ENCODE measurements at regions of chr22 and their contacts with region 1.

Region 1: GRCh38 chr22:30634471-30635233 is 929 bp upstream of the SLC35E4 start:
- DNase-seq: peak; percentile 91 to 96
- ATAC-seq: peak; percentile 92
- H3K4me3 ChIP-seq: no peak overlapping the region
- H3K27ac ChIP-seq: peak overlapping the region; percentile 62 to 79
- H3K4me1 ChIP-seq: no peaks in the 10 kb centered on the region
- H3K27me3 ChIP-seq: no peaks in the 10 kb centered on the region

Region 2: DNA sequence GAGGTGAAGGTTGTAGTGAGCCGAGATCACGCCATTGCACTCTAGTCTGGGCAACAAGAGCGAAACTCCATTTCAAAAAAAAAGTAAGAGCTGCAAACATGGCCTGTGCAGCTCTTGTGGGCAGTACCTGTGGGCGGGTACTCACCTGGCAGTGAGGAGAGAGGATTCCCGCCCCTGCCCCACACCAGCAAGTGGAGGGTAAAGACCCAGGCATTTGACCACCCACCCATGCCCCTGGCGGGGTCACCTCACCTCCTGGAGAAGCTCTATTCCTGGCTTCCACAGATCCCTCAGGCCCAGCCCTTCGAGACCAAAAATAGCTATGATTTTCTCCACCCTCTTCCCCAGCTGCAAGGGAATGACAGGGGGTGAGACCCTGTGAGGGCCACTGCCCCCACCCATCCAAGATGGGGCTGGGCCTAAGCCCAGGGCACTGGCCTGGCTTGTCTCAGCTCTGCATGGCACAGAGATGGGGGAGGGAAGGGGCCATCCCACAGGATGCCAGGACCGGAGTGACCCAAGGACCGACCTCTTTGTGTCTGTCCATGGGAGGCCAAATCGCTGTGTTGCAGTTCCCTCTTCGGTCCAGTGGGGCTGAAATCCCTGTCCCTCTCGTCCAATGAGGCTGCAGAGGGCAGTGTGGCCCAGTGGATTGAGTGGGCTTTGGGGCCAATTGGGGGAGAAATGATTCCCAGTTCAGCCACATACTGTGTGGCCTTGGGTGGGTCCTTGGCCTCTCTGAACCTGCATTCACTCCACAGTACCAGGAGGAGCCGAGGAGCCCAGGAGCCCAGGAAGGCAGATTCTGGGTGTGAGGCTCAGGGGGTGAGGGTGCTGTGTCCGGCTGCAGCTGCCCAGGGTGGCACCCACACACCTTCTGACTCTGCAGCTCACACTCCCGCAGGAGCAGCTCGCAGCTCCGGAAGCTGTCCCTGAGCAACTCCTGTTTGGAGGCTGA is 102.7 kb before region 1 on chr22:
- intact Hi-C with region 1: no loop called
- DNase-seq: no peak
- ATAC-seq: peak; percentile 26
- H3K4me3 ChIP-seq: no peak overlapping the region
- H3K27ac ChIP-seq: no peak overlapping the region
- H3K4me1 ChIP-seq: no peaks in the 10 kb centered on the region
- H3K27me3 ChIP-seq: no peaks in the 10 kb centered on the region

Region 3: GRCh38 chr22:30649430-30650007 is 14.9 kb after region 1 on chr22:
- intact Hi-C with region 1: no loop called
- DNase-seq: peak; percentile 81 to 87
- ATAC-seq: peak; percentile 67
- H3K4me3 ChIP-seq: no peak overlapping the region
- H3K27ac ChIP-seq: no peak overlapping the region
- H3K4me1 ChIP-seq: no peaks in the 10 kb centered on the region
- H3K27me3 ChIP-seq: no peaks in the 10 kb centered on the region

Region 4: DNA sequence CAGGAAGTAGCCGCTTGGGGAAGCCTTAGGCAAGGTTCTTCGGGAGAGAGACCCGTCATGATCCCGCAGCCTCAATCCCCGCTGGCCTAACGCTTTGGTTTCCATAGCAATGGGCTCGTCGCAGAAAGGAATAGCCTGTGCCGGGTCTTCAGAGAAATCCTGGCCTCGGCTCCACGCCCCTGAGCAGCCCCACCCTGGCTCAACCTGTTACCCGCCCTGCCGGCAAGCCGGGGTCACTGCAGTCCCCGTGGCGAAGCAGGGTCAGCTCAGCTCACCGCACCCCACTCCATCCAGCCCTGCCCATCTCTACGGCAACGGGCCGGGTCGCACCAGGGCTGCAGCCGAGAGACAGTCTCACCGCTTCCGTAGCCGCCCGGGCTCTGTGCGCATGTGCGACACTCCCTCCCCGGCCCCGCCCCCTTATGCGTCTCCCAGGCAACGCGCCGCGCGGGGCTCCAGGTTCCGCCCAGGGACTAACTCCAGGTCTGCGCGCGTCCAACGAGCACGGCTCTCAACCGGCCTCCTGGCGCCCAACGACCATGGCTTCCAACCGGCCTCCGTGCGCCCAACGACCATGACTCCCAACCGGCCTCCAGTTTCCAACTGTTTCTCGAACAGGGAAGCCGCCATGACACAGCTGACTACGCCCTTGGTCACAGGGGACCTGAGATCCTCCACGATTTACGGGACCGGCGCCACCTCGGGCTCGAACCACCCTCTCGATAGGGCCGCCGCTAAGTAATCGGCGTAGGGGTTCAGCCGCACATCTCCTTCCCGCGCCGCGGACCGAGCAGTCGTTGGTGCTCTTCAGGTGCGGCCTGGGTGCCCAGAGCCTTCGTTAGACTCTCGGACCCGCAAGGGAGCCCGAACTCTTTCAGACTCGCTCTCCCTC is 33.1 kb after region 1 on chr22 and contains the start of gene DUSP18:
- intact Hi-C with region 1: loop called in 1 of 2 experiments (anchors 1 kb)
- DNase-seq: peak; percentile 94 to 98
- ATAC-seq: peak; percentile 98
- H3K4me3 ChIP-seq: peak within 1 kb of the TSS; percentile 54 to 55
- H3K27ac ChIP-seq: no peak within 1 kb of the TSS
- H3K4me1 ChIP-seq: no peaks in the 10 kb centered on the region
- H3K27me3 ChIP-seq: no peaks in the 10 kb centered on the region
- total RNA-seq, gene DUSP18: 8.7 to 11.3 TPM

Region 5: DNA sequence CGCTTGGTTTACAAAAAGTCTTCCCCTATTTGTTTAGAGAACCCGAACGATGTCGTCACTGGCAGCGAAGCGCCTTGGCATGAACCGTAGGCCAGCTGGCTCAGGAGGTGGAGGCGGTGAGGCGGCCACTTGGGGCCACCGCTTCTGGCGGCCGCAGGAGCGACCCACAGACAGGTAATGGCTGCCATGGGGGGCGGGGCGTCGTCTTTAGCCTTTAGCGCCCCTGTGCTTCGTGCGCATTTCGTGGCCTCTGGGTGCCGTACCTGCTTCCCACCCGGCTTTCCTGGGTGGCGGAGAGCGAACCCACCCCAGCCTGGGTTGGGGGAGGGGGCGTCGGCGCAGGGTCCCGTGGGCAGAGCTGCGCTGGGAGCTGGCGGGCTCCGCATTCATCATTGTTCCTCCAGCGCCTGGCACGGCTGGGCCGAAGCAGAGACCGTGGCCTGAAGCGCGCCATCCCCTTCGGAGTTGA is 59.6 kb after region 1 on chr22:
- intact Hi-C with region 1: loop called in 1 of 2 experiments (anchors 2 kb)
- DNase-seq: peak; percentile 65 to 81
- ATAC-seq: peak; percentile 49
- H3K4me3 ChIP-seq: peak overlapping the region in 1 of 2 donors; percentile 42
- H3K27ac ChIP-seq: no peak overlapping the region
- H3K4me1 ChIP-seq: no peaks in the 10 kb centered on the region
- H3K27me3 ChIP-seq: no peaks in the 10 kb centered on the region

Region 6: GRCh38 chr22:30754971-30755756 is 120.5 kb after region 1 on chr22:
- intact Hi-C with region 1: loop called (anchors 2 to 5 kb)
- DNase-seq: peak in 1 of 2 donors; percentile 64
- ATAC-seq: no peak
- H3K4me3 ChIP-seq: no peak overlapping the region
- H3K27ac ChIP-seq: no peak overlapping the region
- H3K4me1 ChIP-seq: no peaks in the 10 kb centered on the region
- H3K27me3 ChIP-seq: no peaks in the 10 kb centered on the region

Region 7: DNA sequence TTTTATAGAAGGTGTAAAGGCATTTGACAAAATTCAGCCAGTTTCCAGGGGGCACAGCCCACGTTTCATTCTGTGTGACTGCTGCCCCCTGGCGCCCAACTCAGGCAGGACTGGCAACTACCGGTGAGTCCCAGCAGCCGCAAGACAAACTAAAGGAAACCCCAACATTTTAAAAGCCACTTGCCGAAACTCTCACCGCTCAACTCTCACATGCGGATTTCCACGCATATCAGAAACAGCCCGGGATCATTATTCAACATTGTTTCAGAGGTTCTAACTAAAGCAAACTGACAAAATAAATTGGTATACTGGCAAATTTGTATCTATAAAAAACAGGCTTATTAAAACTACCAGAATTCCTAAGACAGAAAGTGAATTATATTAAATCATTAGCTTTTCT is 285.8 kb after region 1 on chr22:
- intact Hi-C with region 1: loop called (anchors 10 kb)
- DNase-seq: peak; percentile 84 to 95
- ATAC-seq: peak; percentile 80
- H3K4me3 ChIP-seq: no peak overlapping the region
- H3K27ac ChIP-seq: no peak overlapping the region
- H3K4me1 ChIP-seq: peaks cover 0 to 2% of the 10 kb centered on the region in 2 donors
- H3K27me3 ChIP-seq: no peaks in the 10 kb centered on the region

Region 8: DNA sequence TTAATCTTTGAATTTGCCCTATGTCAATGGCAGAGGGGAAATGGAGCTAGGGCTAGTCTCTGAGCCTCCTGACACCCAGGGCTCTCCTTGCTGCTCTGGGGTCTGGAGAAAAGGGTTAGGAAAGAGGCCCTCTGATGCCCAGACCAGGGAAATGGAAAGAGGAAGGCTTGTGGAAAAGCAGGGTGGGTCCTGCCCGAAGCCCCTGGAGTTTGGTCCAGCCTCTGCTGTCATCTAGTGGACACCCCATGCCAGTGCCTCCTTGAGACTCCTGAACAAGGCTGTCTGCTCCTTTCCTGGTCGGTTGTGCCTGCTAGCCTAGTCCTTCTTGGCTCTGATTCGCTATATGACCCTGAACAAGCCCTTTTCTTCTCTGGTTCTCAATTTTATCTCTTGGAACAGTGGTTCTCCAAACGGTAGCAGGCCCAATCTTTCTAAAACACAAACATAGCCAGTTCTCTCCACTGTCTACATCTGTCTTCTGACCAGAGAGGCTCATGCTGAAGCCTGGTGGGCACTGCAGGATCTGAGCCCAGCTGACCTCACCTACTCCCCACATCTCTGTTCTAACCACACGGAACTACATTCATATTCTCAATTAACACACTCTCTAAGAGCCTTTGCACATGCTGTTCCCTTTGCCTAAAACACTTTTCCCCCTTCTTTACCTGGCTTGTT is 514.4 kb after region 1 on chr22:
- intact Hi-C with region 1: loop called in 1 of 2 experiments (anchors 10 kb)
- DNase-seq: peak; percentile 80 to 86
- ATAC-seq: peak; percentile 95
- H3K4me3 ChIP-seq: no peak overlapping the region
- H3K27ac ChIP-seq: peak overlapping the region; percentile 89 to 97
- H3K4me1 ChIP-seq: peaks cover 0 to 3% of the 10 kb centered on the region in 2 donors
- H3K27me3 ChIP-seq: no peaks in the 10 kb centered on the region

Measured in aorta (tissue), 5 donors.